ENCODE measurements at regions of chr14 and their contacts with region 1.

Region 1: GRCh38 chr14:31106768-31107167 is 80.6 kb upstream of the STRN3 start:
- DNase-seq: no peak
- ATAC-seq: no peak
- H3K4me3 ChIP-seq: no peak overlapping the region
- H3K27ac ChIP-seq: no peak overlapping the region
- H3K4me1 ChIP-seq: no peaks in the 10 kb centered on the region
- H3K27me3 ChIP-seq: no peaks in the 10 kb centered on the region
- CTCF ChIP-seq: no peak
- POLR2A ChIP-seq: no peak

Region 2: DNA sequence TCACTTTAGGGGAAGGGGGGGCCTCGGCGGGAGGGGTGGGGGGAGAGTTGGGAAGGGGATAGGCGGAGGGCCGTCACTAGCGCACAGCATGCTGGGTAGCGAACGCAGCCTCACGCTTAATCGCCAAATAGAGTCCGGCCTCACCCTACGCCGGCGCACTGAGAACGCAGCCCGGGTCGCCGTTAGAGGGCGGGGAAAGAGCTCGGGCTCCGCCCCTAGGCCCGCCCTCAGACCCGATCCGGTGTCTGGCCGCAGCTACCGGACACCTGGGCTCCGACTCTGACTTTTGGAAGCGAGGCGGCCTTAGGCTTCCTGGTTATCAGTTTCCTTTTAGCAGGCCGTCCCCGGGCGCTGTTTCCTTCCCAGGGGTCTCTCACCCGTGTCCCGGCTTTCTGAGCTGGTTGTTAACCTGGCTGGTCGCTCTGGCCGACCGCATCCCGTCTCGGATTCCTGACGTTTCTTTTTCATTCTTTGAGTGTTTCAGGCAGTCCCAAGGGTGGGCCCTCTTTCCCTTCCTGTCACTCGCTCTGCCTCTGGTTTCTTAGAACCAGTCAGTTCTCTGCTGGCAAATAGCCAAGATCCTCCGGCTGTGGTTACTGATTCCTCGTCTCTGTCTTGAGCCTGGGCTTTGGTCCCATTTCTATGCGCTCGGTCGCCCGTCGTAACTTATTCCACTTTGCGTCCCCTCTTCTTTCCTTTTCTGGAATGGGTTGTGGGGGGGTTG is 80.2 kb before region 1 on chr14:
- intact Hi-C with region 1: no loop called
- DNase-seq: peak; percentile 97 to 98 (median 97)
- ATAC-seq: peak; percentile 98 to 100 (median 99)
- H3K4me3 ChIP-seq: peak overlapping the region; percentile 64 to 99 (median 96)
- H3K27ac ChIP-seq: peak overlapping the region; percentile 87 to 100 (median 98)
- H3K4me1 ChIP-seq: peaks cover 3 to 36% (median 23%) of the 10 kb centered on the region in 12 donors
- H3K27me3 ChIP-seq: no peaks in the 10 kb centered on the region
- CTCF ChIP-seq: peak in 3 of 12 donors; percentile 16 to 26 (median 18)
- POLR2A ChIP-seq: peak in 1 of 2 donors; percentile 59

Region 3: GRCh38 chr14:31142455-31143087 is 35.8 kb after region 1 on chr14:
- intact Hi-C with region 1: loop called in 2 of 10 experiments (anchors 5 kb)
- DNase-seq: no peak
- ATAC-seq: no peak
- H3K4me3 ChIP-seq: no peak overlapping the region
- H3K27ac ChIP-seq: no peak overlapping the region
- H3K4me1 ChIP-seq: no peaks in the 10 kb centered on the region
- H3K27me3 ChIP-seq: no peaks in the 10 kb centered on the region
- CTCF ChIP-seq: no peak
- POLR2A ChIP-seq: no peak

Region 4: DNA sequence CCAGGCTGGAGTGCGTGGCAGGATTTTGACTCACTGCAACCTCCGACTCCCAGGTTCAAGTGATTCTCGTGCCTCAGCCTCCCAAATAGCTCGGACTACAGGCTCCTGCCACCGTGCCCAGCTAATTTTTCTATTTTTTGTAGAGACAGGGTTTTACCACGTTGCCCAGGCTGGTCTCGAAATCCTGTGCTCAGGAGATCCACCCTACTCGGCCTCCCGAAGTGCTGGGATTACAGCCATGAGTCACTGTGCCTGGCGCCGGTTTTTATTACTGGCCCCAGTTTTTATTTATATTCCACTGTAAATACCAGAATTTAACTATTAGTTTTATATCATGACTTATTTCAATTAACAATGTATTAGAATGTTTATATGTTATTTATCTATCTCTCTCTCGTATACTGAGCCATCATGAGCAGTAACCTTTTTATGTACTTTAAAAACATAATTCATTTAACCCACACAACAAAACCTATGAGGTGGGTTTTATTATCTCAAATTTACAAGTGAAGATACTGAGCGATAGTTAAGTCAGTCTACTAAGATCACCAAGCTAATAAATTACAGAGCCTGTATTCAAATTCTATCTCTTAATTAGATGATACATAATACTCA is 53.0 kb after region 1 on chr14:
- intact Hi-C with region 1: loop called in 1 of 10 experiments (anchors 5 kb)
- DNase-seq: no peak
- ATAC-seq: no peak
- H3K4me3 ChIP-seq: no peak overlapping the region
- H3K27ac ChIP-seq: peak overlapping the region in 1 of 12 donors; percentile 37
- H3K4me1 ChIP-seq: peaks cover 0 to 4% (median 0%) of the 10 kb centered on the region in 12 donors
- H3K27me3 ChIP-seq: no peaks in the 10 kb centered on the region
- CTCF ChIP-seq: no peak
- POLR2A ChIP-seq: no peak